ENCODE measurements at regions of chr11 and their contacts with region 1.

Region 1: DNA sequence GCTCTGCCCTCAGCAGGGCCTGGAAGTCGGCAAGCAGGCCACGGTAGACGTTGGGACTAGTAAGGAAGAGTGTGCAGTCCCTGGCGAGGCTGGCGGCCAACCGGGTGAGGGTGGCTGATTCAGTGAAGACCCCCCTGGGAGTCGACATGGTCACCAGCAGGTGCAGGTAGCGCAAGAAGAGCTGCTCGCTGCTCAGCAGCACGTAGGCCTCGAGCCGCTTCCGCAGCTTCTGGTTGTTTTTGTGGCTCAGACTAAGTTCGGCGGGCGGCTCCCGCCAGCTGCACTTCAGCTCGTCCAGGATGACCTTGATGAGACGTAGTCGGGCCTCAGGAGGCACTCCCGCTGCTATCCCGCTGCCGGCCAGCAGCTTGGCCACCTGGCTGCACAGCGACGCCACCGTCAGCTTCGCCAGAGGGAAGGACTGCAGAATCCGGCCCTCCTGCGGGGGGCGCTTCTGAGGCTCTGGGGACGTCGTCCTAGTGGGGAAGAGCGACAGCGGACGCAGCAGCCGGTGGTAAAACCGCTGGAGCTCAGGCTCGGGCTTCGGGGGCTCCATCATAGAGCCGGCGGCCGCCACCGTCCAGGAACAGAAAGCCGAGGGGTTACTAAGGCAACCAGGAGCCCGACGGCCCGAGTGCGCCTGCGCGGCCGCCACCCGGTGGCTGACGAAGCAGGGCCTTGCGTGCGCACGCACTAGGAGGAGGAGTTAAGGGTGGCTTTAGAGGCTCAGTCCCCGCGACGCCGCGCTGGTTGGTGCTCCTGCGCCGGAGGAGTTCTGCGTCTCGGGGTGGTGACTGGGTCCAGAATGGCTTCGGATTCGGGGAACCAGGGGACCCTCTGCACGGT is at the starts of genes CCDC87 and CCS:
- DNase-seq: peak; percentile 96 to 100
- ATAC-seq: peak; percentile 98
- H3K4me3 ChIP-seq: peak within 1 kb of the TSS; percentile 68
- H3K27ac ChIP-seq: peak within 1 kb of the TSS; percentile 89 to 91
- H3K4me1 ChIP-seq: peaks cover 9% of the 10 kb centered on the region; the same call in 2 of the 3 replicates
- CTCF ChIP-seq: peak; percentile 68
- EP300 ChIP-seq: no peak
- POLR2A ChIP-seq: peak; percentile 99
- RAD21 ChIP-seq: peak in 1 of 2 experiments; percentile 45; a peak in 3 of 5 replicates
- polyA plus RNA-seq, gene CCDC87: 0.47 and 0.54 TPM in 2 replicates
- polyA plus RNA-seq, gene CCS: 17.2 and 18.3 TPM in 2 replicates

Region 2: GRCh38 chr11:66282468-66283386 is 310.0 kb before region 1 on chr11:
- CTCF ChIA-PET with region 1: no interaction called
- POLR2A ChIA-PET with region 1: no interaction called
- DNase-seq: peak; percentile 89 to 96
- ATAC-seq: peak; percentile 58 to 89
- H3K4me3 ChIP-seq: no peak overlapping the region
- H3K27ac ChIP-seq: peak overlapping the region in 1 of 2 experiments; percentile 55; a peak in 2 of 6 replicates
- H3K4me1 ChIP-seq: peaks cover 32% of the 10 kb centered on the region
- CTCF ChIP-seq: peak; percentile 90
- EP300 ChIP-seq: no peak
- POLR2A ChIP-seq: no peak
- RAD21 ChIP-seq: peak; percentile 51 to 53

Region 3: DNA sequence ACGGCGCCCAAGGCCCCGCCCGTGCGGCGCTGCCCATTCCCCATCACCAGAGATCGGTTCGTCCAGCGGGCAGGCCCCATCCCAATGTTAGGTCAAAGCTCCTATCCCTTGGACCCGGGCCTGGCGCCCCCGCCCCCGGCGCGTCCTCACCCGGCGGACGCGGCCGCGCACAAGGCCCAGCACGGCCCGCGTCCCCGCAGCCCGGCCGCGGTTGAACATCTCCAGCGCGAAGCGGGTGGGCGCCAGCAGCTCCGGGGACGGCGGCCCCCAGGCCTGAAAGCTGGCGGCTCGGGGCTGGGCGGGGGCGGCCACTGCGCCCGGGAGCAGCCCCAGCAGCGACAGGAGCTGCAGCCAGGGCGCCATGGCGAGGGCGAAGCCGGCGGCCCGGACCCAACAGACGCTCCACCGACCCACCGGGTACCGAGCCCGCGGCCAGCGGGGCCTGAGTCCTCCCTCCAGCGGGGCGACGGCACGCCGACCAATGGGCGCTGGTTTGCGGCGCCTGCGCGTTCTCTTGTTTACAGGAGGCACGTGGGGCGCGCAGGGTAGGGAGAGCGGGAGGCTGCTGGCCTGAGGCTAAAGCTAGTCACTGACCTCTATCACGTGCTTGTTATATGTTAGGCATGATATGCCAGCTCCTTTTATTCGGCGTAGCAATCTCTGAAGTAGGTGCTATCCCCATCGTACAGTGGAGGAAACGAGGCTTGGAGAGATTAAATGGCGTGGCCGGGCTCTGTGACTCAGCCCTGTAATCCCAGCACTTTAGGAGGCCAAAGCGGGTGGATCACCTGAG is 24.4 kb before region 1 on chr11 and contains the start of gene CTSF:
- CTCF ChIA-PET with region 1: interaction called, 16 read pairs
- POLR2A ChIA-PET with region 1: no interaction called
- DNase-seq: peak; percentile 83 to 97
- ATAC-seq: peak; percentile 92 to 95
- H3K4me3 ChIP-seq: peak within 1 kb of the TSS; percentile 68
- H3K27ac ChIP-seq: peak within 1 kb of the TSS; percentile 80 to 87
- H3K4me1 ChIP-seq: peaks cover 5% of the 10 kb centered on the region; the same call in 1 of the 3 replicates
- CTCF ChIP-seq: no peak
- EP300 ChIP-seq: no peak
- POLR2A ChIP-seq: peak; percentile 53
- RAD21 ChIP-seq: no peak
- polyA plus RNA-seq, gene CTSF: 19.2 and 29.1 TPM in 2 replicates

Region 4: DNA sequence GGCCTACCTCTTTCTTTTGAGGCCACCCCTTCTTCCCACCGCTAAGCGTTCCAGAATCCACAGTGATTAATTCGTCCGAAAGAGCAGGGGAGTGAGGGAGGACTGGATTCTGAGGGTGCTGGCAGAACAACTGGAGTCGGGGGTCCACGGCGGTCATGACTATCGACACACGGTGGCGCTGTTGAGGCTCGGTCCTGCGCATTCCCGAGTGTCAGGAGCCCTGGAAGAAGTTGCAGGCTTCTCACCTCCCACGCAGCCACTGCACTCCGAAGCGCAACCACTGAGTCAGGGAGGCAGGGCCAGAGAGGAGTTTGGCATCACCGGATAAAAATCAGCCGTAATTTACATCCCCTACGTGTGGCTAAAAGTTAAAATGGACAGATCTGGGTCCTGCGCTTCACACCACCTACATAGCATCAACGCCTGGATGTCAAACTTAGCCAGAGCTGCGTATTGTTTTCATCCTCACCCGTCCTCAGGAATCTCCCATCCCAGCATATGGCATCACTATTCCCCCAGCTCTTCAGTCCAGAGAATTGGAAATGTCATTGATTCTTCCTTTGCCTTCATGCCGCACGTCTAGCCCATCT is 13.6 kb before region 1 on chr11:
- CTCF ChIA-PET with region 1: interaction called, 89 read pairs
- POLR2A ChIA-PET with region 1: no interaction called
- DNase-seq: peak; percentile 62 to 87
- ATAC-seq: peak; percentile 93 to 95
- H3K4me3 ChIP-seq: no peak overlapping the region
- H3K27ac ChIP-seq: no peak overlapping the region
- H3K4me1 ChIP-seq: peaks cover 9% of the 10 kb centered on the region
- CTCF ChIP-seq: peak; percentile 69
- EP300 ChIP-seq: no peak
- POLR2A ChIP-seq: no peak
- RAD21 ChIP-seq: peak; percentile 67 to 73

Region 5: DNA sequence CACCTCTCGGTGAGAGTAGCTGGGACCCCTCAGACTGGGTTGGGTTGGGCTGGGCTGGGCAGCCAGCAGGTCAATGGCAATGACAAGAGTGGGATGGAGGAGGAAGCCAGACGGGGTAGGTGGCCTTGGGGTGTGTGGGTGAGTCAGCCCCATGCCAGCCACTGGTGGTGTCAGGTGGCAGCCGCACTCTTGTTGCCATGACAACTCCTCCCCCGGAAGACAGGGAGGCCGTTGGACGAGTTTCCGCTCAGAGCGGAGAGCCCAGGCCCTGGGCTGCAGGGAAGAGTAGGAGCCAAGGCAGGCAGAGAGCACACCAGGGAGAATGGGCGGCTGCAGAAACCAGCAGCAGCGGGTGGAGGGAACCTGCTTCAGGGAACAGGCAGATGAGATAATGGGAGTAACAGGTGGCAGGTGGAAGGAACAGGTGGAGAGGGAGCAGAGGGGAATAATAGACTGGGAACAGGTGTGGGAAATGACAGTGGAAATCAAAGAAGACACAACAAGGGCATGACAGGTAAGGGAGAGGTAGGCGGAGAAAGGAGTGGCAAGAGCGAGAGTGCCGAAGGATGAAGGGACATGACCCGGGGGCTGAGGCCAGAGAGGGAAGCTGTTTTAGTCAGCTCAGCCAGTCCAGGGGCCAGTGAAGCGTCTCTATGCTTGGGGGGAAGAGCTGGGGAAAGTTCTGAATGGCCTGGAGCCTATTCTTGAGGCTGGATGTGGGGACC is 127.7 kb after region 1 on chr11:
- CTCF ChIA-PET with region 1: no interaction called
- POLR2A ChIA-PET with region 1: no interaction called
- DNase-seq: peak; percentile 37 to 45
- ATAC-seq: peak in 1 of 2 experiments; percentile 25; a peak in 3 of 6 replicates
- H3K4me3 ChIP-seq: no peak overlapping the region
- H3K27ac ChIP-seq: no peak overlapping the region
- H3K4me1 ChIP-seq: peaks cover 21% of the 10 kb centered on the region
- CTCF ChIP-seq: no peak
- EP300 ChIP-seq: no peak
- POLR2A ChIP-seq: no peak
- RAD21 ChIP-seq: no peak

Region 6: GRCh38 chr11:66906061-66906735 is 313.5 kb after region 1 on chr11:
- CTCF ChIA-PET with region 1: no interaction called
- POLR2A ChIA-PET with region 1: no interaction called
- DNase-seq: peak in 1 of 2 experiments; percentile 61
- ATAC-seq: peak in 1 of 2 experiments; percentile 19; a peak in 3 of 6 replicates
- H3K4me3 ChIP-seq: no peak overlapping the region
- H3K27ac ChIP-seq: peak overlapping the region; percentile 76 to 83
- H3K4me1 ChIP-seq: peaks cover 55% of the 10 kb centered on the region
- CTCF ChIP-seq: no peak
- EP300 ChIP-seq: no peak
- POLR2A ChIP-seq: no peak
- RAD21 ChIP-seq: no peak